Dorsolateral prefrontal cortex (tissue), 120 donors: ENCODE measurements at regions of chr18 and their contacts with region 1.

Region 1: DNA sequence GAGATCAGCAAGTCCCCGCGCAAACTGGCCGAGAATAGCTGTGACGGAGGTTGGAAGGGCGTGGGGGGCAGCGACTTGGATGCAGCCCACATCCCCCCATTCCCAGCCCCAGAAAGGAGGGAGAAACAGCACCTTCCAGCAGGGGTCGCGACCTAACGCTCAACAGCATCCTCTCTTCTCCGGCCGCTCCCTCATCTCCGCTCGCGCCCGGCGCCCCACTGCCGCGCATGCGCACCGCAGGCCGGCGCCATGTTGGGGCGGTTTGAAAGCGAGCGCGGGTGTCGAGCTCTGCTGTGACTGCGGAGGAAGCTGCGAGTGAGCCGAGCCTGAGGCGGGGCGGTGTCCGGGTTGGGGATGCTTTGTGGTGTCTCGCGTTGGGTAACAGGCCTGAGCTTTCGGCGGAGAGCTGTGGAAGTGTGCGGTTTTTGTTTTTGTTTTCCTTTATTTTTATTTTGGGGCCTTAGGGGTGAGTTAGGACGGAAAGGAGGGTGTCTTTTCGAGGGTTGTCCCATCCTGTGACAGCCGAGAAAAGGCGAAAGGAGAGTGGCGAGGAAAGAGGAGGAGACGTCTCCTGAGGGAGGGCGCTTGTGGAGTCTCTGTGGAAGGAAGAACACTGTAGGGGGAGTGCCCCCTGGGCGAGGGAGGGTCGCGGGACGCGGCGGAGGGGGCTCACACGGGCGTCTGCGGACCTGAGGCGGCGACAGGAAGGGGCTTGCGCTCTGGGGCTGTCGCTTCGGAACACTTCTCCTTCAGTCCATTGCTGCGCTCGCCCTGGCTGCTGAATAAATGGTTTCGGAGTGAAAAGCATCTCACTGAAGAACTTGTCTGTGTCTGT is at the starts of genes C18orf54 and STARD6:
- DNase-seq: peak; percentile 65 to 91 (median 78)
- H3K4me3 ChIP-seq: peak within 1 kb of the TSS; percentile 64 to 96 (median 80)
- H3K27ac ChIP-seq: peak within 1 kb of the TSS in 56 of 59 donors; percentile 24 to 93 (median 73)
- H3K27me3 ChIP-seq: peaks cover 0 to 8% (median 0%) of the 10 kb centered on the region in 45 donors
- CTCF ChIP-seq: peak; percentile 16 to 85 (median 69)
- total RNA-seq, gene C18orf54: 1.6 to 12.1 (median 4.0) TPM
- total RNA-seq, gene STARD6: 0.38 to 2.3 (median 0.80) TPM in 26 of 120 experiments, not detected in the others

Region 2: GRCh38 chr18:54224379-54225014 is 133.4 kb before region 1 on chr18 and contains the start of gene MBD2:
- intact Hi-C with region 1: loop called (anchors 2 to 5 kb)
- DNase-seq: peak; percentile 87 to 96 (median 93)
- H3K4me3 ChIP-seq: peak within 1 kb of the TSS; percentile 49 to 81 (median 72)
- H3K27ac ChIP-seq: peak within 1 kb of the TSS in 54 of 59 donors; percentile 3 to 82 (median 69)
- H3K27me3 ChIP-seq: no peaks in the 10 kb centered on the region
- CTCF ChIP-seq: peak in 50 of 56 donors; percentile 11 to 64 (median 46)
- total RNA-seq, gene MBD2: 22.9 to 55.8 (median 36.4) TPM

Region 3: GRCh38 chr18:54269893-54270844 is 87.7 kb before region 1 on chr18:
- intact Hi-C with region 1: loop called in 1 of 2 experiments (anchors 5 kb)
- DNase-seq: peak in 5 of 10 donors; percentile 23 to 52 (median 39)
- H3K4me3 ChIP-seq: peak overlapping the region; percentile 50 to 99 (median 88)
- H3K27ac ChIP-seq: peak overlapping the region in 58 of 59 donors; percentile 26 to 96 (median 85)
- H3K27me3 ChIP-seq: no peaks in the 10 kb centered on the region
- CTCF ChIP-seq: peak in 46 of 56 donors; percentile 7 to 52 (median 37)